CD4-positive, alpha-beta T cell (primary cell): ENCODE measurements at regions of chr16 and their contacts with region 1.

Region 1: DNA sequence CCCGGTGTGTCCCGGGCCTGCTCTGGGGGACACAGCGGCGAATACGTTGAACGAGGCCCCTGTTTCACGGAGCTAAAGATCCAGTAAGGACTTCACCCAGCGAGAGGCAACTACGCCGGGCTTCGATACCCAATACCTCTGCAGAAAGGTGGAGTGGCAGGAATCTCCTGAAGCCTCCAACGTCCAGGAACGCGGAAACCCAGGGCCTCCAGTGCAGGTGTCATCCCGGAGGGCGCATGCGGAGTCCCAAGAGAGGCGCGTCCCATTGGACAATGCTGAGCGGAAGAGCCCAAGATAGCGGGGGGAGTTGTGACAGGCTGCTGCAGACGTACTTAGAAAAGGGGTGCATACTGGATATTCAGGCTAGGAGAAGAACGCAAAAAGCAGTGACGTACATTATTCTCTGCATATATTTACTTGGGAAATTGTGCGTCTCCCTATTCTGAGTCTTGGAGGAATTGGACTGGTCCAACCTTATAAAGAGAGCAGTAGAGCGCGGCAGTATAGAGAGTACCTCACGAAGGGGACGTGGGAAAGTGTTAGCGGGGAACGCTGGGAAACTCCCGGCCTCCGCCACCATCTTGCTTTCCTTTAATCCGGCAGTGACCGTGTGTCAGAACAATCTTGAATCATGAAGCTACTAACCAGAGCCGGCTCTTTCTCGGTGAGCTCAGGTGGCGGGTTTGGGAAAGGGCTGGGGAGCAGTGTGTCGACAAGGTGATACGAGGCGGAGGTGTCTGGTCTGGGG is at the start of gene UQCRC2:
- DNase-seq: peak; percentile 76 to 95 (median 82)
- ATAC-seq: peak; percentile 87
- H3K4me3 ChIP-seq: peak within 1 kb of the TSS; percentile 92
- H3K4me3 Mint-ChIP-seq: peak within 1 kb of the TSS; percentile 94
- H3K27ac ChIP-seq: peak within 1 kb of the TSS; percentile 93 to 96
- H3K27ac Mint-ChIP-seq: peak within 1 kb of the TSS; percentile 94
- H3K4me1 ChIP-seq: peaks cover 52% of the 10 kb centered on the region
- H3K4me1 Mint-ChIP-seq: peaks cover 62% of the 10 kb centered on the region
- H3K27me3 ChIP-seq: no peaks in the 10 kb centered on the region
- H3K27me3 Mint-ChIP-seq: no peaks in the 10 kb centered on the region
- CTCF ChIP-seq: no peak
- total RNA-seq, gene UQCRC2: 142 to 146 TPM

Region 2: DNA sequence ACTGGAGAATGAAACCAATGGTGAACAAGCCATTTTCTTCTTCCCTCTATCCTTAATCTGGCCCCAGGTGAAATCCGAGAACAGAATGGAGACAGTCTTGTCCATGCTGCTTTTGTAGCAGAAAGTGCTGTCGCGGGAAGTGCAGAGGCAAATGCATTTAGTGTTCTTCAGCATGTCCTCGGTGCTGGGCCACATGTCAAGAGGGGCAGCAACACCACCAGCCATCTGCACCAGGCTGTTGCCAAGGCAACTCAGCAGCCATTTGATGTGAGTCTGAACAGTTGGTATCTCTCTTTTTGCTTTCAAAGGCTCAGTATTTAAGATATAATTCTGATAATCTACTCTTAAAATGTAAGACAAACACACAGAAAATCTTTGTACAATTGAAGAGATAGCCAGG is 18.9 kb after region 1 on chr16:
- CTCF ChIA-PET with region 1: no interaction called
- POLR2A ChIA-PET with region 1: no interaction called
- intact Hi-C with region 1: no loop called
- DNase-seq: no peak
- ATAC-seq: no peak
- H3K4me3 ChIP-seq: no peak overlapping the region
- H3K4me3 Mint-ChIP-seq: no peak overlapping the region
- H3K27ac ChIP-seq: no peak overlapping the region
- H3K27ac Mint-ChIP-seq: peak overlapping the region; percentile 24
- H3K4me1 ChIP-seq: no peaks in the 10 kb centered on the region
- H3K4me1 Mint-ChIP-seq: no peaks in the 10 kb centered on the region
- H3K27me3 ChIP-seq: no peaks in the 10 kb centered on the region
- H3K27me3 Mint-ChIP-seq: no peaks in the 10 kb centered on the region
- CTCF ChIP-seq: no peak

Region 3: DNA sequence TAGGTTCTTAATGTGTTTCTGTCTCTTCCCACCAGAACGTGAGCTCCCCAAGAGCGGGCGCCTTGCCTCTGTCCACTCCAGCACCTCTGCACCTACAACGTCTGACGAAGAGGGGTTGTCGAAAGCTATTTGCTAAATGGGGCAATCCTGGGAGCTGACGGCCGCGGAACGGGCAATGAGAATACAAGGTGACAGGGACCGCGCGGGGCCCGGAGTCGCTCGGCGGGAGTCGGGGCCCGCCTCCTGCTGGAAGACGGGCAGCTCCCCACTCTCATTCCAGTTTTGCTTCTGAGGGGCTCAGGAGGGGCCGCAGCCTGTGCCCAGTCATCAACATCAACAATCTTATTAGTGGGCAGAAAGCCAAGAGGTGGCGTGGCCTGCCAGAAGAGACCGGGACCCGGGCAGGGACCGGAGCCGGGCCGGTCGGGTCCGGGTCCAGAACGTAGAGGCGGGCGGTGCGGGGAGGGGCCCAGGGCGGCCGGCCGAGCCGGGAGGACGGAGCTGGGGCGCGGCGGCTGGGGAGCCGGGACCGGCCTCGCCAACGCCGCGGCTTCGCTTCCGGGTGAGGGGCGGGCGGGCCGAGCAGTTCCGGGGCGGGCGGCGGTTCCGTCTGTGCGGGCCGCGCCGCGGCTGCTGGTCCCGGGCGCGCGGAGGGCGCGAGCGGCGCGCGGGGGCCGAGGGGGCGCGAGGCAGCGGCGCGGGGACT is 54.7 kb after region 1 on chr16 and contains the start of gene MOSMO:
- CTCF ChIA-PET with region 1: interaction called, 3 read pairs
- POLR2A ChIA-PET with region 1: interaction called, 3 read pairs
- intact Hi-C with region 1: loop called in 1 of 2 experiments (anchors 1 kb)
- DNase-seq: peak; percentile 37 to 85 (median 66)
- ATAC-seq: peak; percentile 83
- H3K4me3 ChIP-seq: peak within 1 kb of the TSS; percentile 89
- H3K4me3 Mint-ChIP-seq: peak within 1 kb of the TSS; percentile 90
- H3K27ac ChIP-seq: peak within 1 kb of the TSS; percentile 37 to 47
- H3K27ac Mint-ChIP-seq: peak within 1 kb of the TSS; percentile 79
- H3K4me1 ChIP-seq: peaks cover 28% of the 10 kb centered on the region
- H3K4me1 Mint-ChIP-seq: peaks cover 51% of the 10 kb centered on the region
- H3K27me3 ChIP-seq: no peaks in the 10 kb centered on the region
- H3K27me3 Mint-ChIP-seq: no peaks in the 10 kb centered on the region
- CTCF ChIP-seq: no peak
- total RNA-seq, gene MOSMO: 2.3 to 2.8 TPM

Region 4: GRCh38 chr16:22030087-22030812 is 77.3 kb after region 1 on chr16:
- CTCF ChIA-PET with region 1: no interaction called
- POLR2A ChIA-PET with region 1: no interaction called
- intact Hi-C with region 1: no loop called
- DNase-seq: no peak
- ATAC-seq: no peak
- H3K4me3 ChIP-seq: no peak overlapping the region
- H3K4me3 Mint-ChIP-seq: no peak overlapping the region
- H3K27ac ChIP-seq: no peak overlapping the region
- H3K27ac Mint-ChIP-seq: no peak overlapping the region
- H3K4me1 ChIP-seq: peaks cover 2% of the 10 kb centered on the region
- H3K4me1 Mint-ChIP-seq: peaks cover 42% of the 10 kb centered on the region
- H3K27me3 ChIP-seq: no peaks in the 10 kb centered on the region
- H3K27me3 Mint-ChIP-seq: no peaks in the 10 kb centered on the region
- CTCF ChIP-seq: no peak